Heart right ventricle (tissue), 16 donors: ENCODE measurements at regions of chr6 and their contacts with region 1.

Region 1: GRCh38 chr6:5143634-5144311 is 58.6 kb downstream of the PPP1R3G start:
- DNase-seq: peak; percentile 87
- ATAC-seq: peak; percentile 57 to 91 (median 78)
- H3K4me3 ChIP-seq: no peak overlapping the region
- H3K27ac ChIP-seq: no peak overlapping the region
- H3K4me1 ChIP-seq: peaks cover 0 to 7% (median 0%) of the 10 kb centered on the region in 9 donors
- H3K27me3 ChIP-seq: no peaks in the 10 kb centered on the region
- CTCF ChIP-seq: peak; percentile 90 to 98 (median 94)

Region 2: GRCh38 chr6:4844108-4844507 is 299.7 kb before region 1 on chr6:
- intact Hi-C with region 1: no loop called
- DNase-seq: no peak
- ATAC-seq: no peak
- H3K4me3 ChIP-seq: no peak overlapping the region
- H3K27ac ChIP-seq: no peak overlapping the region
- H3K4me1 ChIP-seq: peaks cover 0 to 20% (median 15%) of the 10 kb centered on the region in 9 donors
- H3K27me3 ChIP-seq: no peaks in the 10 kb centered on the region
- CTCF ChIP-seq: peak in 2 of 9 donors; percentile 15 to 23

Region 3: DNA sequence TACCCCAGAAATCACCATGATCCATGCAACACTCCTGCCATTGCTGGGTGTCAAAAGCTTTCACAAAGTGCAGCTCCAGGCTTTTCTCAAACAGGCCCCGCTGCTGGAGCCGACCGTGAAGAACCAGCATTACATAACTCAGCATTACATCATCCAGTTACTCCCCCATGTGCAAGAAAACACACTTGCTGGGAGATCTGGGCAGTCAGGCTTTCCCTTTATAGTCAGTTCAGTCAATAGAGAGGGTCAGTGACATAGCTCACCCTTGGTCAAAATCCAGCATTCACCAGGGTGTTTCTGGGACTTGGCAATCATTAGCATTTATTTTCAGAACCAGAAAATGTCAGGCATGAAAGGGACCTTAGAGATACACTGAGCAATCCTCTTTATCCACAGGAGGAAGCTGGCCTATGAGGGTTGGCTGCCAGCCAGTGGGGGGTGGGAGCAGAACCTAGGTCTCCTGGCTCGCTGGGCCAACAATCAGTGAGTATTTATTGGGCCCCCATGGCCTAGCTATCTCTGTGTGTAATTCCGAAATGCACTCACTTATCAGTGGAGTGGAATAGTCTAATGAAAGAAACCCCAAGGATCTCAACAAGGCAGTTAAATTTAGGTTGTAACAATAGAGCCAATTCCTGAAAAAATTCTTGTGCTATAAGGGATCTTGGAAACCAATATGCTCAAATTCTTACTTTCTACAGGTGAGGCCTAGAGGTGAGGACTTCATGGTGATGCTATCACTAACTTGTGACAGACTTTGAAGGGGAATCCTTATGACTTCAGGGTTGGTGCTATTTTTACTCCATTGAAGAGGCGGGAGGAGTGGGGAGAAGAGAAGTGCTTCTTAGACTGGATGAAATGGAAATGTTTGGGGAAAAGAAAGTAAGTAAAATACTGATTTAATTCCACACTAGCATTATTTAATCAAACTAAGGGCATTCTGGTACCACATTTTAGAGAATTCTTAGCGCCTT is 62.4 kb after region 1 on chr6:
- intact Hi-C with region 1: loop called in 9 of 10 experiments (anchors 5 to 10 kb)
- DNase-seq: peak; percentile 67 to 80
- ATAC-seq: peak; percentile 86 to 92 (median 90)
- H3K4me3 ChIP-seq: no peak overlapping the region
- H3K27ac ChIP-seq: peak overlapping the region; percentile 47 to 92 (median 82)
- H3K4me1 ChIP-seq: peaks cover 19 to 75% (median 57%) of the 10 kb centered on the region in 9 donors
- H3K27me3 ChIP-seq: no peaks in the 10 kb centered on the region
- CTCF ChIP-seq: no peak

Region 4: GRCh38 chr6:5260661-5261544 is 117.1 kb after region 1 on chr6 and contains the starts of genes FARS2 and LYRM4:
- intact Hi-C with region 1: loop called in 6 of 10 experiments (anchors 5 to 10 kb)
- DNase-seq: peak; percentile 89 to 90
- ATAC-seq: peak; percentile 97 to 99 (median 98)
- H3K4me3 ChIP-seq: peak within 1 kb of the TSS; percentile 62 to 96 (median 84)
- H3K27ac ChIP-seq: peak within 1 kb of the TSS; percentile 92 to 100 (median 99)
- H3K4me1 ChIP-seq: peaks cover 0 to 27% (median 22%) of the 10 kb centered on the region in 9 donors
- H3K27me3 ChIP-seq: no peaks in the 10 kb centered on the region
- CTCF ChIP-seq: peak in 3 of 9 donors; percentile 34 to 67 (median 47)
- total RNA-seq, gene FARS2: 17.9 to 22.4 (median 21.4) TPM
- total RNA-seq, gene LYRM4: 20.9 to 33.0 (median 25.1) TPM

Region 5: DNA sequence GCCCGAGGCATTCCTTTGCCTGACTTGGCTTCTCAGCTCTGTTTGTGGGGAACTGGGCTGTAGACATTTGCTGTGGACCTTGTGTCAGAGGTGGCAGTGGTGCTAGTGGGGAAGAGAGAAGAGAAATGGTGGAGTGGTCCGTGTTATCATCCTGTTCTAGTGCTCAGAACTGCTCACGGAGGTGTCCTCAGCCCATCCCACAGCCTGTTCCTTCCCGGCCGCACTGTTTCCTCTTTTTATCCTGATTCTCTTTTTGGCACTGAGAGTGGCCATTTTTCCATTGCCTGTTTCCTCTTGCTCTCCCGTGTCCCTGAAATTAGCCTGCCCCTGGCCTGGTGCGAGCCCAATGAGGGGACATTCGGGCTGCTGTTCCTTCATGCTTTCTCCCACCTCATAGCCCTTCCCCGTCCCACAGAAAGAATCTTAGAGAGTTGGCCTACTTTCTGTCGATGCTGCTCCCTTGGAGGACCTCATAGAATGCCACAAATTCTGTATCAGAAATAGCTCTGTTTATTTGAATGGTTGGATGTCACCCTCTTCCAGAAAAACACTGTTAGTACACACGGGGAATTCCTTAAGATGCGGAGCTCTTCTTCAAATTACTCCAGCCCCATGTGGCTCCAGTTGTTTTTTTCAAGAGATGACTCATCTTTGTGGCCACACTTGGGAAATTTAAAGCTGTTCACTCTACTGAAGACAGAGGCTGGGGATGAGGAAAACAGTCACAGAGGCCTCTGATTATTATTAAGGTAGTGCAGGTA is 143.6 kb after region 1 on chr6:
- intact Hi-C with region 1: no loop called
- DNase-seq: peak in 1 of 2 donors; percentile 22
- ATAC-seq: peak; percentile 50 to 78 (median 72)
- H3K4me3 ChIP-seq: peak overlapping the region in 1 of 10 donors; percentile 3
- H3K27ac ChIP-seq: peak overlapping the region in 9 of 10 donors; percentile 8 to 66 (median 49)
- H3K4me1 ChIP-seq: peaks cover 6 to 29% (median 18%) of the 10 kb centered on the region in 9 donors
- H3K27me3 ChIP-seq: no peaks in the 10 kb centered on the region
- CTCF ChIP-seq: peak in 1 of 9 donors; percentile 7

Region 6: GRCh38 chr6:5398530-5398929 is 254.8 kb after region 1 on chr6:
- intact Hi-C with region 1: loop called (anchors 2 to 5 kb)
- DNase-seq: no peak
- ATAC-seq: peak in 1 of 8 donors; percentile 25
- H3K4me3 ChIP-seq: no peak overlapping the region
- H3K27ac ChIP-seq: no peak overlapping the region
- H3K4me1 ChIP-seq: peaks cover 0 to 9% (median 0%) of the 10 kb centered on the region in 9 donors
- H3K27me3 ChIP-seq: no peaks in the 10 kb centered on the region
- CTCF ChIP-seq: peak in 8 of 9 donors; percentile 23 to 63 (median 56)

Region 7: DNA sequence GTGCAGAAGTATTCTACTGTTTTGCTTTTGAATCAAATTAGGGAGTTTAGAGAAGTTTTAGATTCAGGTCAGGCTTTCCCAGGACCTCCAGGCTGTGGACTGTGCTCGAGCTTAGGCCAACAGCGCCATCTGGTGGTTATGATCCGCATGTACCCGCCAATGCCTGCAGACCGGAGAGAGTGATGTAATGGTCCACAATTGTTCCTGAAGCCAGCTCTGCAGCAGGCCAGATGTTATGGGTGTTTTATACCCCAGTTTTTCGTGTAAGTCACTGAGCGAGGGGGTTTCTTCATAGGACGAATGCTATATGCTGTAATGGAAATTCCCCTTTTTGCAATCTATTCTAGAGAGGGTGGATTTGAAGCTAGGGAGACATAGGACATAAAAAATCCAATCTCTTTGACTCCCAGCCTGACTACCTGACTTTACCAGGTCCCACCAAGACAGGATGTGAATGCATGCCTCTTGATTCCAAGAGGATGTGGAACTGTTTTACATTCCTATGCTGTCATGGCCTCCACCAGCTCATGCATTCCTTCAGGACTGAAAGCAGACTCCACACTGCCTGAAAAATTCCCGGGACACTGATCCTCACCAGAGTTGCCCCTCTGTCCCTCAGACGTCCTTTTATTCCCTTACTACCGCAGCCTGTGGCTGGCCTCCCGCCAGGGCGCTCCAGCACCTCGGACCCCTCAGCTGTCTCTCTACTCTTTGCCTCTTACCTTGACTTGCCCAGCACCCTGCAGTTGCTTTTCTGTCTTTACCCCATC is 1403.5 kb after region 1 on chr6:
- intact Hi-C with region 1: loop called in 4 of 10 experiments (anchors 5 to 10 kb)
- DNase-seq: peak; percentile 86 to 92
- ATAC-seq: peak; percentile 94 to 98 (median 98)
- H3K4me3 ChIP-seq: peak overlapping the region in 9 of 10 donors; percentile 36 to 68 (median 54)
- H3K27ac ChIP-seq: peak overlapping the region in 6 of 10 donors; percentile 8 to 75 (median 29)
- H3K4me1 ChIP-seq: peaks cover 0 to 20% (median 12%) of the 10 kb centered on the region in 9 donors
- H3K27me3 ChIP-seq: peaks cover 0 to 31% (median 10%) of the 10 kb centered on the region in 7 donors
- CTCF ChIP-seq: peak; percentile 93 to 98 (median 95)